ENCODE measurements at regions of chr10 and their contacts with region 1.

Region 1: GRCh38 chr10:1724921-1725488 is 12.3 kb downstream of the ADARB2 start:
- DNase-seq: no peak

Region 2: DNA sequence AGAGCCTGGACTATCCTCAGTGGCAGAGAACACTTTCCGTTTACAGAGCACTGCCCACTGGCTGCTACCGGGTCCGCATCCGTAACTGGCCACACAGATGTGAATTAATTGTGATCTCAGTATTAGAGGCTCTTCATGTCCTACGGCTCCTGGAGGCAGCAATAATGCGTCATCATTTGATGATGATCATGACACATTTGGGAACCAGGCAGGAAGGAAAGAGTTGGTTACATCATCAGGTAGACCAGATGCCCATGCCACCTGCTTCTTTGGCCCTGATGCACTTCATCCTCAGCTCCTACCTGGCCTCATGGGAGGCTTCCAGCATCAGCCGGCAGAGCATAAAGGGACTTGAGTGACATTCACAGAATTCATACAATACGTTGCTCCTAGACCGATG is 65.2 kb after region 1 on chr10:
- intact Hi-C with region 1: no loop called
- DNase-seq: no peak

Region 3: GRCh38 chr10:2978111-2978510 is 1253.1 kb after region 1 on chr10:
- intact Hi-C with region 1: loop called in 1 of 2 experiments (anchors 5 kb)
- DNase-seq: no peak